Activated T-helper 2 cell treated with anti-CD3 and anti-CD28 coated beads, Interferon-gamma antibody, Interleukin-2, Interleukin-4, amounts not matched to agents 10 μg/mL and 5 μg/mL and 100 μg/mL, durations not matched to agents 14 hours and 24 hours and 36 hours (primary cell): ENCODE measurements at regions of chr3 and their contacts with region 1.

Region 1: DNA sequence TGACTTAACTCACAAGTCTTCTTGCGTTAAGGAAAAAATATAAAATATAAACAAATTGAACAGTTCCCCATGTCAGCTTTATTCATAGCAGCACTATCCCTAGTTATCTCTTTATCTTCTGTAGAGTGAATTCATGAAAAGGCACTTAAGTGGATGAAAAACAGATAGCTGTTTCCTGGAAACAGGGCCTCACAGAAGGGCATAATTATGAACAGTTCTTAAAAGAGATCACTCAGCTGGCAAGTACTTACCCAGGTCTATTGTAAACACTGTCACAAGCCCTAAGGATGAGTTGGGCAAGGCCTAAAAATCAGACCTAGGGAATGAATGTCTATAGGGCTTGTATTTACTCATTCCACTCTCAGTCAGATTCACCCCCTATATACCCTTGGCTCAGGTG is 10.7 kb downstream of the MB21D2 start:
- DNase-seq: no peak
- H3K4me3 Mint-ChIP-seq: no peak overlapping the region
- H3K27ac Mint-ChIP-seq: peak overlapping the region; percentile 72
- H3K4me1 Mint-ChIP-seq: peaks cover 35% of the 10 kb centered on the region
- H3K27me3 Mint-ChIP-seq: peaks cover 2% of the 10 kb centered on the region

Region 2: GRCh38 chr3:192675958-192676649 is 230.8 kb before region 1 on chr3:
- intact Hi-C with region 1: loop called (anchors 5 kb)
- DNase-seq: no peak
- H3K4me3 Mint-ChIP-seq: no peak overlapping the region
- H3K27ac Mint-ChIP-seq: peak overlapping the region; percentile 90
- H3K4me1 Mint-ChIP-seq: peaks cover 11% of the 10 kb centered on the region
- H3K27me3 Mint-ChIP-seq: peaks cover 22% of the 10 kb centered on the region

Region 3: GRCh38 chr3:192700885-192701284 is 206.1 kb before region 1 on chr3:
- intact Hi-C with region 1: no loop called
- DNase-seq: no peak
- H3K4me3 Mint-ChIP-seq: no peak overlapping the region
- H3K27ac Mint-ChIP-seq: no peak overlapping the region
- H3K4me1 Mint-ChIP-seq: no peaks in the 10 kb centered on the region
- H3K27me3 Mint-ChIP-seq: no peaks in the 10 kb centered on the region

Region 4: DNA sequence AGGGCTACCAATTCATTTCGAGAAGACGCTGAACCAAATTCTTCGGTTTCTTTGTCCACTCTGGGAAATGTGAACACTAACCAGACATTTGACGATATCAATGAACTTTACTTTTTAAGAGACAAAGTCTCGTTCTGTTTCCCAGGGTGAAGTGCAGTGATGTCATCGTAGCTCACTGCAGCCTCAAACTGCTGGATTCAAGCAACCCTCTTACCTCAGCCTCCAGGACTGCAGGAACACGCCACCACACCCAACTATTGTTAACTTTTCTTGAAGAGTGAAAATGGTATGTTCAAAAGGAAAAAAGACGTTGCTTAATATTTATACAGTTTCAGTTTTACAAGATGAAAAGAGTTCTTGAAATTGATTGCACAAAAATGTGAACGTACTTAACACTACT is 19.9 kb before region 1 on chr3:
- intact Hi-C with region 1: loop called (anchors 1 kb)
- DNase-seq: no peak
- H3K4me3 Mint-ChIP-seq: peak overlapping the region; percentile 17
- H3K27ac Mint-ChIP-seq: peak overlapping the region; percentile 75
- H3K4me1 Mint-ChIP-seq: peaks cover 55% of the 10 kb centered on the region
- H3K27me3 Mint-ChIP-seq: peaks cover 2% of the 10 kb centered on the region

Region 5: DNA sequence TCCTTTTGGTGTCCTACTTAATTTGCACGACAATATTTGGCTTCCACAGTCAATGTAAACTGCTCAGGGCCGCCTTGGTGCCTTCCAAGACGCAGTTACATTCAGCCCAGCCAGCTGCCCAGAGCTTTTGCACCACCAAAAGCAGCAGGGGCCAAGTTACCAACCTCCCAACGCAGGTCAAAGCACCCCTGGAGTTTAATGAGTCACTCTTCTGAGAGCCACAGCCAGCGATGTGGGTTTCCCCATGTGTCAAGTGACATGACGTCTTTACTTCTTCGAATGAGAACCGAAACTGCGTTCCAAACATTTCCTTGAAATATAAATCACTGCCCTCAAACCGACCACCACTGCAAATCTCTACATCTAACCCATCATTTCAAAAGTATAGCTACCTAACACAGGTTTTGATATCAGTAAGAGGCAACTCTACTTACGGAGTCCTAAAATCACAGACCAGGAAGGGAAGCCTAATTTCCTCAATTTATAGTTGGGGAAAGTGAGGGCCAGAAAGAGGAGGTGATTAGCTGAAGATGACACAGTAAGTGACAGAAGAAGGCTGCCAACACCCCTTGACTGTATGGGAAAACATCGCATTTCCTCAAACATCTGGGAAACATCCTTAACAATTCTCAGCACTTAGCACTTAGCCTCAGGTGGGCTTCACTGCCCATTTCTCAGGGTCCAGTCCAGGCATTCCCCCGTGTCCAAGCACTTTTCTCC is 13.8 kb before region 1 on chr3:
- intact Hi-C with region 1: loop called (anchors 2 kb)
- DNase-seq: peak; percentile 77
- H3K4me3 Mint-ChIP-seq: peak overlapping the region; percentile 34
- H3K27ac Mint-ChIP-seq: peak overlapping the region; percentile 82
- H3K4me1 Mint-ChIP-seq: peaks cover 79% of the 10 kb centered on the region
- H3K27me3 Mint-ChIP-seq: peaks cover 10% of the 10 kb centered on the region

Region 6: GRCh38 chr3:192933779-192934460 is 27.0 kb after region 1 on chr3:
- intact Hi-C with region 1: loop called (anchors 1 kb)
- DNase-seq: no peak
- H3K4me3 Mint-ChIP-seq: no peak overlapping the region
- H3K27ac Mint-ChIP-seq: peak overlapping the region; percentile 91
- H3K4me1 Mint-ChIP-seq: peaks cover 14% of the 10 kb centered on the region
- H3K27me3 Mint-ChIP-seq: peaks cover 2% of the 10 kb centered on the region

Region 7: GRCh38 chr3:192957441-192958021 is 50.6 kb after region 1 on chr3:
- intact Hi-C with region 1: no loop called
- DNase-seq: no peak
- H3K4me3 Mint-ChIP-seq: no peak overlapping the region
- H3K27ac Mint-ChIP-seq: peak overlapping the region; percentile 64
- H3K4me1 Mint-ChIP-seq: peaks cover 25% of the 10 kb centered on the region
- H3K27me3 Mint-ChIP-seq: no peaks in the 10 kb centered on the region